ENCODE measurements at regions of chr17 and their contacts with region 1.

Region 1: DNA sequence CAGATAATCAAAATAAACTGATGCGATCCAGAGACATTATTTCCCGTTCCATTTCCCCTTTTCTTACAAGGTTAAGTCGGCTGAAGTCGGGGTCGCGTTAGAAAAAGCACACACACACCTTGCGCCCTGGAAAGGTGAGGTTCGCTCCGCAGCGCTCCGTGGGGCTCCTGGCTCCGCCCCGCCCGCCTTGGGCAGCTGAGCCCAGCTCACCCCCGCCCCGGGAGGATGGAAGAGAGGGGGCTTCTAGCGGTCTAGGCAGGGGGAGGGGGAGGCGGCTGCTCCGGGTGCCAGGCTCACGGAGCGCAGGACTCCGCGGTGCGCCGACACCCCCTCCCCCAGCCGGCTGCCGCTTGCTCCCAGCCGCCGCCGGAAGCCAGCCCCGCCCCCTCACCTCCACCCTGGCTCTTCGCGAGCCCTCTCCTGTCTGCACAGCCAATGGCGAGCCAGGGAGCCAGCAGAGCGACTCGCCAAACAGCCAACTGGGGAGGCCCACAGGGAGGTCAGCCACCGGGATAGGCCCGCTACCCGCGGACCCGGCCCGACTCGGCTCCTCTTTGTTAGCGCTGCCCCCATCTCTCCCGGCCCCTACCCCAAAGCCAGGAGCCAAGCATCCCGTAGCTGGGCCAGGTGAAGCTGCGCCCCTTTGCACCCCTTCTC is 30.4 kb downstream of the FAM222B start:
- DNase-seq: peak; percentile 99
- ATAC-seq: peak; percentile 100

Region 2: DNA sequence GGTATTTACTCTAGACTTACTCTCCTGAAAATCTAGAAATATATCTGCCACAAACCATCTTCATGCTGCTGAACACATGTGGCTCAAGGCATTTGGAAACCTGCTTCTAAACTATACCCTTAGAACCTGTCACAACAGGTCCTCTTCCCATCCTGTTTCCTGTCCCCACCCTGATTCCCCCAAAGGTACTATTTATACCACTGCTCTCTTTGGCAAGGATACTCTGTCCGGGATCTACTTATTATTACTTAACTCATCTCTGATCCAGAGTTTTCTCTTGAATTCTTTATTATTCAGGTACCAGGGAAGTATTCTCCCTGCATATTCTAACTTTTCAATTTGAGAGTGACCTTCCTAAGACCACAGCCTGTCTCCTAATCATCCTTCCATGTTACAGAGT is 35.0 kb before region 1 on chr17:
- intact Hi-C with region 1: loop called (anchors 5 kb)
- DNase-seq: no peak
- ATAC-seq: no peak

Region 3: DNA sequence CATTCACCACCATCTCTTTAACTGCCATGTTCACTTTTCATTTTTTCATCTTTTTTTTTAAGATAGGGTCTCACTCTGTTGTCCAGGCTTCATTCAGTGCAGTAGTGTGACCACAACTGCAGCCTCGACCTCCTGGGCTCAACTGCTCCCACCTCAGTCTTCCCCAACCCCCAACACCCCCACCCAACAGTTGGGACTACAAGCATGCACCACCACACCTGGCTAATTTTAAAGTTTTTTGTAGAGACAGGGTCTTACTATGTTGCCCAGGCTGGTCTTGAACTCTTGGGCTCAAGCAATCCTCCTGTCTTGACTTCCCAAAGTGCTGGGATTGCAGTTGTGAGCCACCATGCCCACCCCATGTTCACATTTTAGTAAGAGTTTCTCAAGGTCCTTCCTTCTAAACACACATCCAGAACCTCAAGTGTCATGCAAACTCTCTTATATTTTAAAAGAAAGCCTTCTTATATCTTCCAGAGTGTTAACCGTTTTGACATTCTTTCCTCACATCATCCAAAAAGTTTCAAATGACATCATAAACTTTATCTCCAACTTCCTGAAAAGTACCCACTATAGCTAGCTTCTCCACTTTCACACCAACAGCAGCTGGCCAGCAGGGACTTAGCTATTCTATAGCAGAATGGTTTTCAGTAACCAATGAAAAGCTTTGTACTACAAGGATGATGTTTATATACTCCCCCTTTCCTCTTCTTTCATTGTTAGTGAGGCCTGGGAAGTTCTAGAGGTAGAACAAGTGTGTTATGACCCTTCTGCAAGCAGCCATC is 19.1 kb before region 1 on chr17:
- intact Hi-C with region 1: no loop called
- DNase-seq: no peak
- ATAC-seq: no peak